ENCODE measurements at regions of chr10 and their contacts with region 1.

Region 1: GRCh38 chr10:7881119-7881518 is 62.8 kb downstream of the TAF3 start:
- DNase-seq: no peak
- H3K4me3 ChIP-seq: no peak overlapping the region
- H3K27ac ChIP-seq: no peak overlapping the region
- H3K4me1 ChIP-seq: no peaks in the 10 kb centered on the region
- H3K27me3 ChIP-seq: no peaks in the 10 kb centered on the region
- CTCF ChIP-seq: no peak

Region 2: GRCh38 chr10:7388602-7389001 is 492.5 kb before region 1 on chr10:
- CTCF ChIA-PET with region 1: no interaction called
- POLR2A ChIA-PET with region 1: no interaction called
- intact Hi-C with region 1: no loop called
- DNase-seq: no peak
- H3K4me3 ChIP-seq: no peak overlapping the region
- H3K27ac ChIP-seq: no peak overlapping the region
- H3K4me1 ChIP-seq: no peaks in the 10 kb centered on the region
- H3K27me3 ChIP-seq: peaks cover 13% of the 10 kb centered on the region
- CTCF ChIP-seq: no peak

Region 3: DNA sequence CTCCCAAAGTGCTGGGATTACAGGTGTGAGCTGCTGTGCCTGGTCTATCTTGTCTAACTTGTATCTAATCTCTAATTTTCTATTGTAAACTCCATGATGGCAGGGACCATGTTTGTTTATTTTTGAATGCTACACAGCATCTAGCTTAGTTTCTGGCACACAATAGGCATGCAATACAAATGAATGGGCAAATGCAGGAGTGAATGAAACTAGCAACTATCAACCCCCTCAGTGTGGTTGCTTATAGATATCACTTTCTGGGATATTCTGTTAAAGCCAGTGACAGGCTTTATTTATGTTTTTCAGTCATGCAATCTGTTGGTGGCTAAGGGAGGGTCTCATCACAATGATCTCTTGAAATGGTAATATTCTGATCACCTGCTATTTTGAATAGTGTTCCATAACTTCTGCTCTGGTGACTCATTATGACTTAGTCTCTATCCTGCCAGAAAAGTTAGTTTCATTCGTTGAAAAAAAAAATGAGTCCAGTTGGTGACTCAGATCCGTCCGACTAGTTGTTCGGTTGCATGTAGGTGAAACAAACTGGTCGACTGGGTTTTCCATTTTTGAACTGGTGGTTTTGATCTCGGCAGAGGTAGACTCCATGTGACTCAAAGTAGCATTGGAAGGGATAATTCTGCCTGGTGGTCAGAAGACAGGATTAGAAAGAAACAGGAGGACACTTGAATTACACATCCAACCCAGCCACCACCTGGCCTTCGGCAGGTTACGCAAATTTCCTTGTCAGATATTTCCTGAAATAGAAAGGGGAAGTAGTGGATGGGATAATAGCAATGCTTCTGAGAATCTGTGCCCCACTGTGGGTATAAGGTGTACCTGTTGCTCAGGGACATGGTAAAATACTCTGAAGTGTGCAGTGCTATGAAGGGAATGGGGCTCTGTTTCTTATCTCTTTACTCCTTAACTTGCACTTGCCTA is 250.1 kb after region 1 on chr10:
- CTCF ChIA-PET with region 1: no interaction called
- POLR2A ChIA-PET with region 1: no interaction called
- intact Hi-C with region 1: no loop called
- DNase-seq: peak; percentile 58 to 88
- H3K4me3 ChIP-seq: peak overlapping the region; percentile 24; the same call in 1 of the 2 replicates
- H3K27ac ChIP-seq: peak overlapping the region; percentile 93
- H3K4me1 ChIP-seq: peaks cover 14% of the 10 kb centered on the region
- H3K27me3 ChIP-seq: no peaks in the 10 kb centered on the region
- CTCF ChIP-seq: no peak

Region 4: DNA sequence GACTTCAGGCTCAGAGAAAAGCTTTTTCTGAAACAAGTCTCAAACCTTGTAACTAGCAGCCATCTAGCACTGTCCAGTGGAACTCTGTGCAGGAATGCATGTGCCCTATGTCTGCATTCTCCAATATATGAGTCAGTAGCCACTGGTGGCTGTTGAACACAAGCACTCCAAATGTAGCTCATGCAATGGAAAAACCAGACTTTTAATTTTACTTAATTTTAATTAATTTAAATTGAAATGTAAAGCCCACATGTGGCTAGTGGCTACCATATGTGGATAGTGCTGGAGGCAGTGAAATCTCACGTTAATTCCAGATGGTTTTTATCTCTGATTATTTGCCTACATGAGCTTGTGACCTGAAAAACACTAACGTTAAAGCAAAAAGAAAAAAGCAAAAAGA is 398.5 kb after region 1 on chr10:
- CTCF ChIA-PET with region 1: no interaction called
- POLR2A ChIA-PET with region 1: interaction called, 16 read pairs
- intact Hi-C with region 1: no loop called
- DNase-seq: peak; percentile 34 to 57
- H3K4me3 ChIP-seq: no peak overlapping the region
- H3K27ac ChIP-seq: no peak overlapping the region
- H3K4me1 ChIP-seq: peaks cover 13% of the 10 kb centered on the region
- H3K27me3 ChIP-seq: no peaks in the 10 kb centered on the region
- CTCF ChIP-seq: no peak

Region 5: DNA sequence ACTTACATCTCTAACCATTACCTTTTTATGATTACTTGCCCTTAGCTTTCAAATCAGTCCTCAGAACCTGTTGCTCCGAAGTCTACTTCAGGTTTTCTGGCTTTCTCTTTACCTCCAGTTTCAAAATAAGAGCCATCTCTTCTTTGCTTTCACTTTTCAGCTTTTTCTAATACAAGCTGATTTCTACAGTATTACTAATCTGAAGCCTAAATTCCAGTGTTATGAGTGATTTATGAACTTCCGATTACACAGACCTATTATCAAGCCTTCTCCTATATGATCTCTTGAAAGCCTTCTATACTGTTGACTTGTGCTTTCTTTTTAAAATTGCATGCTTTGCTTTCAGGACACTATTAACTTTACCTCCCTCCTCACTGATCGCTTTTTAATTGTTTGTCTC is 1828.7 kb after region 1 on chr10:
- CTCF ChIA-PET with region 1: no interaction called
- POLR2A ChIA-PET with region 1: no interaction called
- intact Hi-C with region 1: no loop called
- DNase-seq: no peak
- H3K4me3 ChIP-seq: no peak overlapping the region
- H3K27ac ChIP-seq: no peak overlapping the region
- H3K4me1 ChIP-seq: no peaks in the 10 kb centered on the region
- H3K27me3 ChIP-seq: no peaks in the 10 kb centered on the region
- CTCF ChIP-seq: no peak

Measured in PC-9 (cell line).